WTC11 (cell line): ENCODE measurements at regions of chr21 and their contacts with region 1.

Region 1: GRCh38 chr21:41612674-41613532 is 104.9 kb upstream of the TMPRSS2 start:
- DNase-seq: peak; percentile 79
- ATAC-seq: peak; percentile 82
- H3K4me3 Mint-ChIP-seq: peak overlapping the region; percentile 30
- H3K27ac Mint-ChIP-seq: peak overlapping the region; percentile 60
- H3K4me1 Mint-ChIP-seq: peaks cover 17% of the 10 kb centered on the region
- H3K27me3 Mint-ChIP-seq: peaks cover 6% of the 10 kb centered on the region
- CTCF ChIP-seq: peak; percentile 81

Region 2: DNA sequence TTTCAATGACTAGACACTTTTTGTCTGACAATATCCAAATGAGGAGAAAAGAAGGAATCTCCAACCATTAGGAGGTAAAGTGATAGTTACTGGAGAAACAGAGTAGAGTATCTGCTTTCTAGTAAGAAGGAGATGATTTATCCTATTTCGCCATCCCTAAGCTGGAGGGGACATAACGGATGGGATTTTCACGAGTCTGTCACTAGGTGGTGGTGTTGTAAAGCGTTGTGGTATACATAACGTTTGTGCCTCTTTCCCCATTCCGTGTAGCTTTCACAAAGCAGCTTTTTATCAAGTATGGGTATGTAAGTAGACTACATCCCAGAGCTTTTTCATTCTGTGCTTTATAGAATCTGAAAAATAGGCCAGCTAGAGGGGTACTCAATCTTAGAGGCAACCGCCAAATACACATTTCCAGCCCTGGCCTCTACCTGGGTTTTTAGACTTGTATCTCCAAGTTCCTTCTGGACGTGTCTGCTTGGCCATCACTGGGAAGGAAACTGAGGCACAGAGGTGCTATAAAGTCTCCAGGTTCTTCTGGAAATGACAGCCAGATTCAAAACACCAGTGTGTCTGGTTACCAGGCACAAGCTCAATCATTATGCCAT is 329.6 kb before region 1 on chr21:
- CTCF ChIA-PET with region 1: interaction called, 34 read pairs
- POLR2A ChIA-PET with region 1: no interaction called
- DNase-seq: peak; percentile 28
- ATAC-seq: peak; percentile 90
- H3K4me3 Mint-ChIP-seq: no peak overlapping the region
- H3K27ac Mint-ChIP-seq: no peak overlapping the region
- H3K4me1 Mint-ChIP-seq: peaks cover 11% of the 10 kb centered on the region
- H3K27me3 Mint-ChIP-seq: no peaks in the 10 kb centered on the region
- CTCF ChIP-seq: peak; percentile 53

Region 3: DNA sequence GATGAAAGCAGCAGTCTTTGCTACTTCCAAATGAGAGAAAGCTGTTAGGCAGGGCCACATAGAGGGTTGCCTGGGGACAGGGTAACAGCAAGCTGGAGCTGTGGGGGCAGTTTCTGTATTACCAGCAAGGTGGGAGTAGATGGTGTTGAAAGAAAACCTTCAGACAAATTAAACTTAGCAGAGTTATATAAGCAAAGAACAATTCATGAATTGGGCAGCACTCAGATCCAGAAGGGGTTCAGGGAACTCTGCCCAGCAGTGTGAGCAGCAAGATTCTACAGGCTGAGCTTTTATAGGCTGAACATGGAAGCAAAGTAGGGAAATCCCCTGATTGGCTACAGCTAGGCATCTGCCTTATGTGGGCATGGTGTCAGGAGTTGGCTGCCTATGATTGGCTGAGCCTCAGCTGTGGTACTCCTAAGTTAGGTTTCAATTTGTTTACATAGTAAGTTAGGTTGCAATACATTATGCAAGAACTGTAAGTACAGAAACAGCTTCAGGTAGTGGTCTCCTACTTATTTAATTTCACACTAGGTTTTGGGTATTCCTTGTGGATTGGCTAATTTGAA is 40.9 kb before region 1 on chr21:
- CTCF ChIA-PET with region 1: no interaction called
- POLR2A ChIA-PET with region 1: no interaction called
- DNase-seq: no peak
- ATAC-seq: no peak
- H3K4me3 Mint-ChIP-seq: no peak overlapping the region
- H3K27ac Mint-ChIP-seq: no peak overlapping the region
- H3K4me1 Mint-ChIP-seq: no peaks in the 10 kb centered on the region
- H3K27me3 Mint-ChIP-seq: no peaks in the 10 kb centered on the region
- CTCF ChIP-seq: no peak

Region 4: GRCh38 chr21:41622831-41623548 is 10.1 kb after region 1 on chr21:
- CTCF ChIA-PET with region 1: interaction called, 40 read pairs
- POLR2A ChIA-PET with region 1: no interaction called
- DNase-seq: no peak
- ATAC-seq: no peak
- H3K4me3 Mint-ChIP-seq: no peak overlapping the region
- H3K27ac Mint-ChIP-seq: no peak overlapping the region
- H3K4me1 Mint-ChIP-seq: no peaks in the 10 kb centered on the region
- H3K27me3 Mint-ChIP-seq: no peaks in the 10 kb centered on the region
- CTCF ChIP-seq: no peak

Region 5: GRCh38 chr21:41673581-41674335 is 60.9 kb after region 1 on chr21:
- CTCF ChIA-PET with region 1: interaction called, 10 read pairs
- POLR2A ChIA-PET with region 1: no interaction called
- DNase-seq: no peak
- ATAC-seq: no peak; the same call in 1 of the 2 replicates
- H3K4me3 Mint-ChIP-seq: no peak overlapping the region
- H3K27ac Mint-ChIP-seq: no peak overlapping the region
- H3K4me1 Mint-ChIP-seq: peaks cover 20% of the 10 kb centered on the region
- H3K27me3 Mint-ChIP-seq: no peaks in the 10 kb centered on the region; the same call in none of the 2 replicates
- CTCF ChIP-seq: no peak

Region 6: GRCh38 chr21:41737656-41738324 is 124.9 kb after region 1 on chr21:
- CTCF ChIA-PET with region 1: interaction called, 84 read pairs
- POLR2A ChIA-PET with region 1: no interaction called
- DNase-seq: no peak
- ATAC-seq: no peak
- H3K4me3 Mint-ChIP-seq: no peak overlapping the region
- H3K27ac Mint-ChIP-seq: no peak overlapping the region
- H3K4me1 Mint-ChIP-seq: no peaks in the 10 kb centered on the region
- H3K27me3 Mint-ChIP-seq: peaks cover 7% of the 10 kb centered on the region; the same call in 1 of the 2 replicates
- CTCF ChIP-seq: no peak

Region 7: DNA sequence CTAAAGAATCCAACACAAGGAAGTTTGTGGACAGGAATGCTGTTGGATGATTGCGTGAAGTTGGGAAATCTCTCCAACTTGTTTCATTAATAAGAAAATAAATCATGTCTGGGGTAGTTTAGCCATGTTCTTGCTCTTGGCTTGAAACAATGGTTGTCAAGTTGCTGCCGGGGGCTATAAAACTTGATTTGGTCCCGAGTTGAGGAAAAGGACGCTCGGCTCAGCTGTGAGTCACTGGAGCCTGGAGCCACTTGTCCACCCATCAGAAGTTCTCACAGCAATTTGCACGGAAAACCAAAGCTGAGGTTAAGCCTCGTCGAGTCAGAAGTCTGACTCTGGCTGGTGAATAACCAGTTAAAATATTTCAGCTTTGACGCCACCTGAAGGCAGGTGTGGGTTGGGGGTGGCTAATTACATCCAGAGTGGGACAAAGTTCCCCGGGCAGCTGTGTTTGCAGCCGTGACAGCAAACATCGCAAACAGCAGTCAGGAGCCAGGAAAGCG is 173.6 kb after region 1 on chr21:
- CTCF ChIA-PET with region 1: interaction called, 18 read pairs
- POLR2A ChIA-PET with region 1: no interaction called
- DNase-seq: no peak
- ATAC-seq: no peak
- H3K4me3 Mint-ChIP-seq: no peak overlapping the region
- H3K27ac Mint-ChIP-seq: no peak overlapping the region
- H3K4me1 Mint-ChIP-seq: no peaks in the 10 kb centered on the region
- H3K27me3 Mint-ChIP-seq: no peaks in the 10 kb centered on the region; the same call in 1 of the 2 replicates
- CTCF ChIP-seq: no peak

Region 8: GRCh38 chr21:41823166-41823565 is 210.3 kb after region 1 on chr21:
- CTCF ChIA-PET with region 1: interaction called, 126 read pairs
- POLR2A ChIA-PET with region 1: no interaction called
- DNase-seq: no peak
- ATAC-seq: no peak
- H3K4me3 Mint-ChIP-seq: no peak overlapping the region
- H3K27ac Mint-ChIP-seq: no peak overlapping the region
- H3K4me1 Mint-ChIP-seq: no peaks in the 10 kb centered on the region
- H3K27me3 Mint-ChIP-seq: no peaks in the 10 kb centered on the region
- CTCF ChIP-seq: no peak

Region 9: GRCh38 chr21:41892726-41893125 is 279.8 kb after region 1 on chr21:
- CTCF ChIA-PET with region 1: no interaction called
- POLR2A ChIA-PET with region 1: no interaction called
- DNase-seq: no peak
- ATAC-seq: no peak
- H3K4me3 Mint-ChIP-seq: no peak overlapping the region
- H3K27ac Mint-ChIP-seq: no peak overlapping the region
- H3K4me1 Mint-ChIP-seq: peaks cover 28% of the 10 kb centered on the region
- H3K27me3 Mint-ChIP-seq: no peaks in the 10 kb centered on the region
- CTCF ChIP-seq: no peak